GM10248 (cell line): ENCODE measurements at regions of chr14 and their contacts with region 1.

Region 1: GRCh38 chr14:49633640-49634546 is 1.2 kb downstream of the DNAAF2 start:
- DNase-seq: peak; percentile 93
- CTCF ChIP-seq: peak; percentile 94

Region 2: DNA sequence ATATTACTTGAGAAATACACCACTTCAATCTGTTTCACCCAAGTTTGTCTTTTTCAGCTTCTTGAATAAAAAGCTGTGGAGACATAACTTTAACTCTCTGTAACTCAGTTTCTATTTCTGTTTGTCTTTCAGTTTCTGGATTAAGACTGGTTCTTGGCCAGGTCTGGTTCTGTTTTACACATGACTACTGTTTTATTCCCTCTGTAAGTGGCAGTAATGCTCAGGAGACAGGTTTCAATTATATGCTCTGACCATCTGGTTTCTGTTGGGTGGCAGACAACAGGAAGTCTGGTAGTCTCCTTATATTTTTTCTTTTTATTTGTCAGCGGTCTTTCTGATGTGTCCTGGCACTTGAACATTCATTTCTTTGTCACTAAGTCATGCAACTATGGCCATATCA is 150.6 kb before region 1 on chr14:
- CTCF ChIA-PET with region 1: no interaction called
- POLR2A ChIA-PET with region 1: no interaction called
- DNase-seq: no peak
- CTCF ChIP-seq: no peak

Region 3: DNA sequence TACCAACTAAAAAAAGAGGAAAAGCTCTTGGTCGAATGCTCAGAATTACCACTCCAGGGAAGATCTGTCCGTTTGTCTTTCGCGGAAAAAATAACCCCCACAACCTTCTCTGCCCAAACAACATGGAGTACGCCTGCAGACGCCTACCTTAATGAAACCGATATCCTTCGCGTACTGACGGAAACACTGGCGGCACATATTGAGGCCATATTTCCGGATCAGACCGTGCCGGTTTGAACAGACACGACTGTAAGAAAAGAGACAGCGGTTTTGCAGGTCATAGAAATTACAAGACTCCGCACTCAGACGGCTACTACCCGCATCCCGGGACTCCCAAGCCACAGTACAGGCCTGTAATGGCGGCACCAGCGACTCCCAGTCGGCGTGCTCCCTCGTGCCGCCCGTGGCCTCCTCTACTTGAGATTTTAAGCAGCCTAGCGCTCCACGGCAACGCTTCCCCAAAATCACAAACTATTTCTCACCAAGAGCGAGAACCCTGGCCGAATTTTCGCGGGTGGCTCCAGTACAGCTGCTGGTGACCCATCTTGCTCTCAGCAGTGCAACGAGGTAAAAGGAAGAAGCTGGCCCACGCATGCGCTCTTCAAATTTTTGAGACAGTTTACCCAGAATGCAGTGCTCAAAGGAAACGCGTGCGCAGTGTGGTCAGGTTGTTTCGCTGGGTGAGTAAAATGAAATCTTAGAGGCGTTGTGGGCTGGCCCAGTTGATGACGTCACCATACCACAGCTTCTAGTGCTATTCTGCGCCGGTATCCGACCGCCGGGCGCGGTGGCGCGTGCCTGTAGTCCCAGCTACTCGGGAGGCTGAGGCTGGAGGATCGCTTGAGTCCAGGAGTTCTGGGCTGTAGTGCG is 47.9 kb before region 1 on chr14 and contains the start of gene RPS29:
- CTCF ChIA-PET with region 1: interaction called, 15 read pairs
- POLR2A ChIA-PET with region 1: interaction called, 4 read pairs
- DNase-seq: peak; percentile 93
- CTCF ChIP-seq: no peak

Region 4: DNA sequence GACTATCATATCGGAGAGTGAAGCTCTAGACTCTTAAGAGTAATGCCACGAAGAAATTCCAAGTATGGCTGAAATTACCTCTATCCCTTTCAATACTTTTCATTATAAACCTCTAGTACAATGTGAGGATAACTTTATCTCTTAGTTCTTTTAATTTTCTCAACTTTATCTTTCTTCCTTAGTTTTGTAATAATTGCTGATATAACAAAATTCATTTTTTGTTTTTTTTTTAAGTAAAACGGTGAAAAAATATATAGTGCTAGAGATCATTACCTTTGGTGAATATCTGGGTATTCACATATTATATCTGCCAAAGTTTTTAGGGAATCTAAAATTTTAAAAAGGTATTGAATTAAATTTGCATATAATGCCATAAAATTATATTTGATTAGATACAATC is 20.6 kb after region 1 on chr14:
- CTCF ChIA-PET with region 1: interaction called, 10 read pairs
- POLR2A ChIA-PET with region 1: interaction called, 11 read pairs
- DNase-seq: no peak
- CTCF ChIP-seq: no peak

Region 5: GRCh38 chr14:49767562-49768300 is 133.8 kb after region 1 on chr14 and contains the start of gene KLHDC2:
- CTCF ChIA-PET with region 1: interaction called, 14 read pairs
- POLR2A ChIA-PET with region 1: interaction called, 9 read pairs
- DNase-seq: peak; percentile 90
- CTCF ChIP-seq: peak; percentile 75

Region 6: DNA sequence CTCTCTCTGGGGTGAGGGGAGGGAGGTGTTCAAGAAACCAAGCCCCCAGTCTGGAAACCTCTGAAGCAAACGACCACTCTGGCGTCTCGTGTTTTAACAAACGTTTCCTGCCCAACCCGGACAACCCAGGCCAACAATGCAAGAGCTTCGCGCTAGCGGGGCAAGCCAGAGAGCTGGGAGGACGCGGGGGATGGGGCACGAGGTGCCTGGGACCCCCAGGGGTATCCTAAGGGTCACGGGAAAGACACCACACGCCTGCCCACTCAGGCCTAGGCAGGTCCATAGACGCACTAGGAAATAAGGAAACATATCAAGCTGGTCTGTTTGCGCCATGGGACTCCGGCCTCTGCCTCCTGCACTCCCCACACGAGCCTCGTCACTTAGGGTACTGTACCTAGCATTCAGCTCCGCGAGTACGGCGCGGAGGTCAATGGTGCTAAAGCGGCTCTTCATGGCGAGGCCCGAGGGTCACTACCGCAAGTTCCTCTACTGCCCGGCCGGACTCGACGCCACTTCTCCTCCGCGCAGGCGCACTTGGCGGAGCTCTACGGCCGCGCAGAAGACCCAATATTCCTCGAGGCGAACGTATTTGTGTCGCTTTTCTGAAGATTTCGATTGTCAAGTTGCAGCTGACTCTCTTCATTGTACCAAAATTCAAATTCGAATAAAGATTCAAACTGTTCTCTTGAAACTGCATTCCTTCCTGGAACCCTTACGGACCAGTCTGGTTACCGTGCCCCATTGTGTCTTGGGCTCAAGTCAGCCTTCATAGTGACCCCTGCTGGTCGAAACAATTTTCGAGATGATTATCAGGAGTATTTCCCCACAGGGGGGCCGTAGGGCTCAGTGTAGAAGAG is 218.6 kb after region 1 on chr14 and contains the start of gene NEMF:
- CTCF ChIA-PET with region 1: interaction called, 28 read pairs
- POLR2A ChIA-PET with region 1: no interaction called
- DNase-seq: peak; percentile 81
- CTCF ChIP-seq: peak; percentile 78